HEK293T (cell line): ENCODE measurements at regions of chr5 and their contacts with region 1.

Region 1: GRCh38 chr5:118379470-118379869 is 608.9 kb downstream of the DTWD2 start:
- DNase-seq: no peak

Region 2: GRCh38 chr5:118270526-118270925 is 108.9 kb before region 1 on chr5:
- CTCF ChIA-PET with region 1: no interaction called
- POLR2A ChIA-PET with region 1: no interaction called
- DNase-seq: no peak

Region 3: DNA sequence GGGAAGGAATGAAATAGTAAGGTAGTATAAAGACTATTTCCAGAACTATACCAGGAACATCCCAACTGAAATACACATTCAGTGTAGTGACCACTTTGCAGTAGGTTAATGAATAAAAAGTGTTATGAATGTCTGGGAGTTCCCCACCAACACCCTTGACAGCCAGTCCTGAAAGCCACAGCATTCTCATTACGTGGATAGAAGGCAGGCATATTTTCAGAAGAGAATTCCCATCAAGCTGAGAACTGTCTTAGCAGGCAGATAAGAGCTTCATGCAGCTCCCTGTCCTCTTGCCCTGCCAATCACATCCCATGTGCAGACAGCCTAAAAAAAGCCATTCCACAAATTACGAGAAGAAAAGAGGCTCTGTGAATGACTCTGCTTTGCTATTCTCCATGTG is 86.1 kb before region 1 on chr5:
- CTCF ChIA-PET with region 1: interaction called, 12 read pairs
- POLR2A ChIA-PET with region 1: no interaction called
- DNase-seq: no peak

Region 4: DNA sequence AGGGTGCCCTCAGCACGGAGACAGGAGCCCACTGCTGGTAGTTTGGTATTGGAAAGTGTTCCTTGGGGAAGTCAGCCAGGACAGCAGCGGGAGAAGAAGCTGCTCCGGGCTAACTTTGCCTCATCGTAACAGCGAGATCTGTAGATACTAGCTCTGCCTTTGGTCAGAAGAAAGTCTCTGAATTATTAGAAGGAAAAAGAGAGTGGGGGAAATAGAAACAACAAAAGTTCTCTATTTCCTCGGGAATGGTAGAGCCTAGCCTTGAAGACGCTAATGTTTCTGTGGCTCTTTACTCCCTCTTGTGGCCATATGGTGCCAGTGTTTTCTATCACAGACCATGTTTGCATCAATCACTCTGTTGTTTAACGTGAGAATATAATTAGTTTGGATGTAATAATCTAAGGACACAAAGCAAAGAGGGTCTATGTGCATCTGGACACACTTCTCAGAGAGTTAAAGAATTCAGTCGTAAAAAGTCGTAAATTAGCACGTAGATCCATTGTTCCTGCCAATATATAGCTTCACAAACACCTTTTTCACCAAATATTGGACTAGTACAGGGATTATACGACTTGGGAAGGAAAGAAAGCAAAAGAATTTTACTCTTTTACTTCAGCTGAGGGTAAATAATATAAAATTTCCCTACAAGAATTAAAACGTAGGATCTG is 1032.6 kb after region 1 on chr5:
- CTCF ChIA-PET with region 1: no interaction called
- POLR2A ChIA-PET with region 1: no interaction called
- DNase-seq: peak; percentile 71